ENCODE measurements at regions of chr3 and their contacts with region 1.

Region 1: GRCh38 chr3:47420511-47421484 is 40.0 kb downstream of the PTPN23 start:
- DNase-seq: peak; percentile 80
- ATAC-seq: peak; percentile 57
- H3K4me3 ChIP-seq: no peak overlapping the region
- H3K27ac ChIP-seq: peak overlapping the region; percentile 34
- H3K4me1 ChIP-seq: peaks cover 48% of the 10 kb centered on the region
- H3K27me3 ChIP-seq: no peaks in the 10 kb centered on the region
- CTCF ChIP-seq: peak; percentile 95
- EP300 ChIP-seq: no peak
- POLR2A ChIP-seq: no peak
- RAD21 ChIP-seq: peak; percentile 82

Region 2: DNA sequence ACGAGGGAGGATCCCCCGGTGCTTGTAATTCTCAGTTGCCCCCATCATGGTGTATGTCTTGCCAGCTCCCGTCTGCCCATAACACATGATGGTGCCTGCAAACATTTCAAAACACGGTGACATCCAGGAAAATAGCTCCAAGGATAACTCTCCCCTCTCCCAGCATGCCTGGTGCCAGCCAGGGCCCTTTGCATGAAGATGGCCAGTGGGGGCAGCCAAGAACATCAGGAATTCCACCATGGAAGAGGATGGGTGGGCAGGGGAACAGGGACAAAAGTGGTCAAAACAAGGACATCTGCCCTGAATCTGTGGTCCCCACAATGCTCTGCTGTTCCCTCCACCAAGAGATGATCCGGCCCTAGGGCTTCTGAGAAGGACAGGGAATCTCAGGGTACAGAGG is 147.2 kb before region 1 on chr3:
- CTCF ChIA-PET with region 1: no interaction called
- POLR2A ChIA-PET with region 1: no interaction called
- in situ Hi-C with region 1: no loop called
- intact Hi-C with region 1: no loop called
- DNase-seq: no peak
- ATAC-seq: peak; percentile 78
- H3K4me3 ChIP-seq: no peak overlapping the region
- H3K27ac ChIP-seq: no peak overlapping the region
- H3K4me1 ChIP-seq: no peaks in the 10 kb centered on the region
- H3K27me3 ChIP-seq: no peaks in the 10 kb centered on the region
- CTCF ChIP-seq: no peak
- EP300 ChIP-seq: no peak
- POLR2A ChIP-seq: no peak
- RAD21 ChIP-seq: no peak

Region 3: GRCh38 chr3:47347217-47347801 is 73.5 kb before region 1 on chr3:
- CTCF ChIA-PET with region 1: no interaction called
- POLR2A ChIA-PET with region 1: no interaction called
- in situ Hi-C with region 1: no loop called
- intact Hi-C with region 1: no loop called
- DNase-seq: no peak
- ATAC-seq: no peak
- H3K4me3 ChIP-seq: no peak overlapping the region
- H3K27ac ChIP-seq: no peak overlapping the region
- H3K4me1 ChIP-seq: peaks cover 13% of the 10 kb centered on the region
- H3K27me3 ChIP-seq: no peaks in the 10 kb centered on the region
- CTCF ChIP-seq: no peak
- EP300 ChIP-seq: no peak
- POLR2A ChIP-seq: no peak
- RAD21 ChIP-seq: no peak

Region 4: GRCh38 chr3:47394881-47395280 is 25.9 kb before region 1 on chr3:
- CTCF ChIA-PET with region 1: no interaction called
- POLR2A ChIA-PET with region 1: no interaction called
- in situ Hi-C with region 1: no loop called
- intact Hi-C with region 1: no loop called
- DNase-seq: no peak
- ATAC-seq: no peak
- H3K4me3 ChIP-seq: no peak overlapping the region
- H3K27ac ChIP-seq: peak overlapping the region; percentile 59
- H3K4me1 ChIP-seq: peaks cover 48% of the 10 kb centered on the region
- H3K27me3 ChIP-seq: no peaks in the 10 kb centered on the region
- CTCF ChIP-seq: no peak
- EP300 ChIP-seq: no peak
- POLR2A ChIP-seq: no peak
- RAD21 ChIP-seq: no peak

Region 5: GRCh38 chr3:47440131-47440530 is 19.3 kb after region 1 on chr3:
- CTCF ChIA-PET with region 1: no interaction called
- POLR2A ChIA-PET with region 1: interaction called, 34 read pairs
- in situ Hi-C with region 1: no loop called
- intact Hi-C with region 1: no loop called
- DNase-seq: peak; percentile 79
- ATAC-seq: peak; percentile 71
- H3K4me3 ChIP-seq: no peak overlapping the region
- H3K27ac ChIP-seq: peak overlapping the region; percentile 60
- H3K4me1 ChIP-seq: peaks cover 63% of the 10 kb centered on the region
- H3K27me3 ChIP-seq: no peaks in the 10 kb centered on the region
- CTCF ChIP-seq: peak; percentile 76
- EP300 ChIP-seq: no peak
- POLR2A ChIP-seq: no peak
- RAD21 ChIP-seq: peak; percentile 85; the same call in 1 of the 2 replicates

Region 6: GRCh38 chr3:47475570-47476329 is 55.0 kb after region 1 on chr3 and contains the start of gene SCAP:
- CTCF ChIA-PET with region 1: interaction called, 36 read pairs
- POLR2A ChIA-PET with region 1: interaction called, 18 read pairs
- in situ Hi-C with region 1: loop called (anchors 5 kb)
- intact Hi-C with region 1: loop called (anchors 1 kb)
- DNase-seq: peak; percentile 85
- ATAC-seq: peak; percentile 86
- H3K4me3 ChIP-seq: peak within 1 kb of the TSS; percentile 80 to 97 (median 81)
- H3K27ac ChIP-seq: peak within 1 kb of the TSS; percentile 78
- H3K4me1 ChIP-seq: peaks cover 37% of the 10 kb centered on the region
- H3K27me3 ChIP-seq: no peaks in the 10 kb centered on the region; a peak in 1 of 5 replicates
- CTCF ChIP-seq: peak; percentile 97
- EP300 ChIP-seq: no peak; a peak in 1 of 4 replicates
- POLR2A ChIP-seq: peak in 1 of 2 experiments; percentile 67; a peak in 2 of 4 replicates
- RAD21 ChIP-seq: peak; percentile 94
- total RNA-seq, gene SCAP: 24.0 and 53.3 TPM in 2 replicates

Region 7: DNA sequence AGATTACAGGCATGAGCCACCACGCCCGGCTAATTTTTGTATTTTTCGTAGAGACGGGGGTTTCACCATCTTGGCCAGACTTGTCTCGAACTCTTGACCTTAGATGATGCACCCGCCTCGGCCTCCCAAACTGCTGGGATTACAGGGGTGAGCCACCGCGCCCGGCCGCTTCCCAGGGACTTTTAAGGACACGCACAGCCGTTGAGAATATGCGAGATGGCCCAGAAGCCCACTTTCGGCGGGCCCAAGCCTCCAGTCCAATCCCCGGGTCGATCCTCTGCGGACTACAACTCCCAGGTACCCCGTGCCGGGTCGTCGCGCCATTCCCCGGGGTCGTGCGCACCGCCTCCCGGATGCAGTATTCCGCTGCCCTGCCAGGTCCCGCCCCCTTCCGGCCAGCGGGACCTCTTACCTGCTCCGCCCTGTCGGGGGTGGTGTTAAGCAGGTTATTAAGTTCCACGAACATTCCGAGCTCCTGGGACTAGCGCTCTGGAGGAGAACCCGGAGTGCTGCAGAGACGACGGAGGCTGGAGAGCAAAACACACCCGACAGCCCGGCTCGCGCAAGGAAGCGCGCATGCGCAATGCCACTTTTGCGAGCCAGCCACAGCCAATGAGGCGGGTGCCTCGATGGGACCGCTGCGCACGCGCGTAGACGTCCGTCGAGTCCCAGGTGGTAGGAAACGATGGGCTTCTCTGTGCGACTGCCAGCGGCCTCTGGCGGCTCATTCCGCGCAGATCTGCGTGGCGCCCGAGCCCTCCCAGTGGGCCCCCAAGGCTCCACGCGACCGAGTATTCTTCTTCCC is 92.5 kb after region 1 on chr3 and contains the start of gene ELP6:
- CTCF ChIA-PET with region 1: interaction called, 16 read pairs
- POLR2A ChIA-PET with region 1: no interaction called
- in situ Hi-C with region 1: loop called (anchors 5 kb)
- intact Hi-C with region 1: loop called (anchors 1 kb)
- DNase-seq: peak; percentile 91
- ATAC-seq: peak; percentile 98
- H3K4me3 ChIP-seq: peak within 1 kb of the TSS; percentile 77 to 87 (median 86)
- H3K27ac ChIP-seq: peak within 1 kb of the TSS; percentile 97
- H3K4me1 ChIP-seq: peaks cover 40% of the 10 kb centered on the region
- H3K27me3 ChIP-seq: no peaks in the 10 kb centered on the region; a peak in 1 of 5 replicates
- CTCF ChIP-seq: peak; percentile 87
- EP300 ChIP-seq: no peak
- POLR2A ChIP-seq: peak; percentile 80 to 87
- RAD21 ChIP-seq: peak; percentile 83
- total RNA-seq, gene ELP6: 38.6 and 45.0 TPM in 2 replicates

Region 8: GRCh38 chr3:47594792-47595191 is 174.0 kb after region 1 on chr3:
- CTCF ChIA-PET with region 1: no interaction called
- POLR2A ChIA-PET with region 1: no interaction called
- in situ Hi-C with region 1: no loop called
- intact Hi-C with region 1: no loop called
- DNase-seq: no peak
- ATAC-seq: no peak
- H3K4me3 ChIP-seq: no peak overlapping the region
- H3K27ac ChIP-seq: no peak overlapping the region
- H3K4me1 ChIP-seq: no peaks in the 10 kb centered on the region
- H3K27me3 ChIP-seq: no peaks in the 10 kb centered on the region
- CTCF ChIP-seq: no peak
- EP300 ChIP-seq: no peak
- POLR2A ChIP-seq: no peak
- RAD21 ChIP-seq: no peak

Region 9: DNA sequence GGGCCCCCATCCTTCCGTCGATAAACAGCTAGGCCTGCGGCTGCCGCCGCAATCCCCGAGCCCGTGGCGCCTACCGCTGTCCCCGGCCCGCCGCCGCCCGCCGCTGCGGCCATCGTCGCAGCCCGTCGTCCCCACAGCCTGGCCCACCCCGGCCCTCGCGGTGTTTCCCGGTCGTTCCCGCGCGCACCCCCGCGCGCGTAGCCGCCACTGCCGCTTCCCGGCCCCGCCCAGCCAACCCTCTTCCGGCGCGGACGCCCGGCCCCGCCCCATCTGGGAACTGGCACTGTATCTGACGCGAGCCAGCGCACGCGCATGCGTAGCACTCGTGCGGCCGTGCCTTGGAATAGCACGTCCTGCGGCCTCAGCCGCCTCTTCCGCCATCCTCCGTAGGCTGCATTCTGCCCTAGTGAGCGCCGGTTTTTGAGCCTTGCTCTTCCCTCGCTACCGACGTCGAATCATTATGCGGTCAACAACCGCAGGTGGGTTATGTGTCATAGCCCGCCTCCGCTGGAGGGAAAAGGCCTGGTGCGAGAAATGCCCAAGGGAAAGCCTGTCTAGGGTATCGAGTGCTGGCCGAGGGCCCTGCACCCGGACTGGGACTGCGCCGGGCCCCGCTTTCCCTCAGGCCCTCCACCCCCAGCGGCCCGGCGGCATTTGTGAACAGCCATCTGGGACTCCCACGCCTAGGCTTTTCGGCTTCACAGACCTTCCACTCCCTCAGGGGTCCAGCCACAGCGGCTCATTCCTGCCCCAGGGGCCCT is 361.1 kb after region 1 on chr3 and contains the start of gene SMARCC1:
- CTCF ChIA-PET with region 1: no interaction called
- POLR2A ChIA-PET with region 1: no interaction called
- in situ Hi-C with region 1: loop called (anchors 10 kb)
- intact Hi-C with region 1: no loop called
- DNase-seq: peak; percentile 93
- ATAC-seq: peak; percentile 92
- H3K4me3 ChIP-seq: peak within 1 kb of the TSS; percentile 80 to 94 (median 88)
- H3K27ac ChIP-seq: peak within 1 kb of the TSS; percentile 91
- H3K4me1 ChIP-seq: peaks cover 45% of the 10 kb centered on the region
- H3K27me3 ChIP-seq: no peaks in the 10 kb centered on the region; a peak in 1 of 5 replicates
- CTCF ChIP-seq: 0 out of 2 replicates have a peak, but pooled peaks have one; percentile 23
- EP300 ChIP-seq: no peak
- POLR2A ChIP-seq: peak; percentile 90 to 97
- RAD21 ChIP-seq: no peak
- total RNA-seq, gene SMARCC1: 53.6 and 58.4 TPM in 2 replicates

Region 10: GRCh38 chr3:47791193-47791855 is 370.5 kb after region 1 on chr3:
- CTCF ChIA-PET with region 1: interaction called, 4 read pairs
- POLR2A ChIA-PET with region 1: no interaction called
- in situ Hi-C with region 1: loop called (anchors 10 kb)
- intact Hi-C with region 1: loop called (anchors 2 kb)
- DNase-seq: no peak
- ATAC-seq: no peak
- H3K4me3 ChIP-seq: no peak overlapping the region
- H3K27ac ChIP-seq: no peak overlapping the region
- H3K4me1 ChIP-seq: peaks cover 21% of the 10 kb centered on the region
- H3K27me3 ChIP-seq: no peaks in the 10 kb centered on the region
- CTCF ChIP-seq: no peak
- EP300 ChIP-seq: no peak
- POLR2A ChIP-seq: no peak
- RAD21 ChIP-seq: no peak